ENCODE measurements at regions of chr1 and their contacts with region 1.

Region 1: GRCh38 chr1:228795596-228795995 is 60.3 kb downstream of the RHOU start:
- DNase-seq: no peak
- ATAC-seq: no peak
- H3K4me3 ChIP-seq: no peak overlapping the region
- H3K27ac ChIP-seq: no peak overlapping the region
- H3K4me1 ChIP-seq: no peaks in the 10 kb centered on the region
- H3K27me3 ChIP-seq: peaks cover 4% of the 10 kb centered on the region; the same call in 1 of the 2 replicates
- CTCF ChIP-seq: no peak

Region 2: DNA sequence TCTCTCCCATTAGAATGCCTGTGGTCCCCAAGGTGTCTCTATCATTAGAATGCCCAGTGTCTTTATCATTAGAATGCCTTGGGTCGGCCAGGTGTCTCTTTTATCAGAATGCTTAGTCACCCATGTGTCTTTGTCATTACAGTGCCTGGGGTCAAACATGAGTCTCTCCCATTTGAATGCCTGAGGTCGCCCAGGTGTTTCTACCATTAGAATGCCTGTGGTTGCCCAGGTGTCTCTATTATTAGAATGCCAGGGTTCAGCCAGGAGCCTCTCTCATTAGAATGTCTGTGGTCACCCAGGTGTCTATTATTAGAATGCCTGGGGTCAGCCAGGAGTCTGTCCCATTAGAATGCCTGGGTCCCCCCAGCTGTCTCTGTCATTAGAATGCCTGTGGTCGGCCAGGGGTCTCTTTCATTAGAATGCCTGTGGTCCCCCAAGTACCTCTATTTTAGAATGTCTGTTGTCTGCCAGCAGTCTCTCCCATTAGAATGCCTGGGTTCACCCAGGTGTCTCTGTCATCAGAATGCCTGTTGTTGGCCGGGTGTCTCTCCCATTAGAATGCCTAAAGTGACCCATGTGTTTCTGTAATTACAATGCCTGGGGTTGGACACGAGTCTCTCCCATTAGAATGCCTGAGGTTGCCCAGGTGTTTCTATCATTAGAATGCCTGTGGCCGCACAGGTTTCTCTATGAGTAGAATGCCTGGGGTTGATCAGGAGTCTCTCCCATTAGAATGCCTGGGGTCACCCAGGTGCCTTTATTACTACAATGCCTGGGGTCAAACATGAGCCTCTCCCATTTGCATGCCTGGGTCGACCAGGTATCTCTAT is 251.4 kb before region 1 on chr1:
- CTCF ChIA-PET with region 1: no interaction called
- POLR2A ChIA-PET with region 1: no interaction called
- in situ Hi-C with region 1: no loop called
- intact Hi-C with region 1: no loop called
- DNase-seq: no peak
- ATAC-seq: no peak
- H3K4me3 ChIP-seq: no peak overlapping the region
- H3K27ac ChIP-seq: no peak overlapping the region
- H3K4me1 ChIP-seq: no peaks in the 10 kb centered on the region
- H3K27me3 ChIP-seq: no peaks in the 10 kb centered on the region; the same call in 1 of the 2 replicates
- CTCF ChIP-seq: no peak

Region 3: DNA sequence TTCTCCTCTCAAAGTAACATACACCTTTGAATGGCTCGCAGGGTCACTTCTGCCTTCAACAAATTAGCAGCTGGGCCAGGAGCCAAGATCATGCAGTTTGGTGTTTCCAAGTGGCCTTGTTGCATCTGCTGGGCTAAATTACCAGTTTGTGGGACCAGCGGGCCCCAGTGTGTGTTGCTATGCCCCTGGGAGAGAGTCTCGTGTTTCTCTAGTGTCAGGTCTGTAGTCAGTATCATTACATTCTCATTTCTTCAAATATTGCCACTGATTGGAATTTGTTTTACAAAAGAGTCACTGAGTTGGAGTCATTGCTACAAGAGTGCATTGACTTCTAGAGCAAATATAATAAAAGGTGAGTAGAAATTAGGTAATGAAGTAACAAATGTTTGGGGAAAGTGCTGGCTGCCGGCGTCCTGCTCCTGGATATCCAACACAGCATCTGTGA is 24.8 kb before region 1 on chr1:
- CTCF ChIA-PET with region 1: interaction called, 13 read pairs
- POLR2A ChIA-PET with region 1: no interaction called
- in situ Hi-C with region 1: no loop called
- intact Hi-C with region 1: no loop called
- DNase-seq: no peak
- ATAC-seq: no peak
- H3K4me3 ChIP-seq: no peak overlapping the region
- H3K27ac ChIP-seq: no peak overlapping the region
- H3K4me1 ChIP-seq: no peaks in the 10 kb centered on the region
- H3K27me3 ChIP-seq: no peaks in the 10 kb centered on the region
- CTCF ChIP-seq: no peak

Measured in Panc1 (cell line).